ENCODE measurements at regions of chr18 and their contacts with region 1.

Region 1: DNA sequence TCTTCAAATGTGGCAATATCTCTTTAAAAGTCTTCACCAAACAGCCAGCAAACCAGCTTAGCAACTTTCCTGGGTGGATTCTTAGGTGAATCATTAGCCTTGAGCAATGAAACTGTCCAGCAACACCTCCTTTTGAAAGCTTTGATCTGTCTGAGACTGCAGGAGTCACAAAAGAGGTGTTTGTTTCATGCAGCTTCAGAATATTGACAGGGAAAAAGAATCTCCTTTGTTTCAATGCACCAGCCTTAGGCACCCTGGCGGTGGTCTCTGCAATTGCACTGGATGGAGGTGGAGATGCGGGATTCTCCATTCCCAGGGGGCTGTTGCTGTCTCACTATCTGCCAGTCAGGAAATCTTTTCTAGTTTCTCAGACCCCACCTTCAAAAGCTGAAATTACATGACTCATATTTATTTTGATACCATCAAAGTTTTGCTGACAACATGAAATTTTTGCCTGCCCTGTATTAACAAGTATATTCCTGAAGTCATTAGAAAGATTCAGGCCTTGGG is 76.0 kb upstream of the DSG1 start:
- DNase-seq: peak; percentile 63 to 95
- H3K4me3 ChIP-seq: no peak overlapping the region; the same call in 1 of the 2 replicates
- H3K27ac ChIP-seq: peak overlapping the region; percentile 94
- H3K4me1 ChIP-seq: peaks cover 45% of the 10 kb centered on the region
- H3K27me3 ChIP-seq: no peaks in the 10 kb centered on the region
- CTCF ChIP-seq: peak; percentile 80

Region 2: DNA sequence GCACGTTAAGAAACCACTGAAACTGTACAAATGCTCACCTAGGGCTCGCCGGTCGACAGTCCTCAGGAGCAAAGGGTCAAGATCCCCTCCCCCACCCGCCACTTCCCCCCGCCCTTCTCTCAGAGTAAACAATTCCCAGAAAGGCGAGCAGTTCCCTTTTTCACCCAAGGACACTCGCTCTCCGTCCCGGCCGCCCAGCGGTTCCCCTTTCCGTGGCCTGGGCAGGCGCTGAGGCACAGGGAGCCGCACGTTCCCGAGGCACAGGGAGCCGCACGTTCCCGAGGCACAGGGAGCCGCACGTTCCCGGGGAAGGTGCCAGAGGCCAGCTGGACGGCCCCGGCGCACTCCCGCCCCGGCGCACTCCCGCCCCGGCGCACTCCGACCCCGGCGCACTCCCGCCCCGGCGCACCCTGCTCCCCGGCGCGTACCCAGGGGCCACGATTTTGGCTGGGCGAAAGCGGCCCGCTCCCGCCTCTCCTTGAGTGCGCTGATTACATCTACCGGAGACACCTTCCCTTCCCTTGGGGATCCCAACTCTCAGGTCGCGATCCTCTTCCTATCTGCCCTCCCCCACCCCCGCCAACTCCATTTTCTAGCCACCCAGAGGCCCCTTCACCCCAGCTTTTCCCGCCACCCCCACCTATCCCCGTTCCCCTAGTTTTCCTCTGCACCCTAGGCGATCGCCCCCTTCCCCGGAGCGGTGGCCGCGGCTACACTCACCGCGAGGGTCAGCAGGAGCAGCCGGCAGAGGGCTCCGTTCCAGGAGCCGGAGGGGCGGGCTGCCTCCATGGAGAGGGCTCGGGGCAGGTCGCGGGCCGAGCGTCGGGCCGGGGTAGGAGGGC is 140.6 kb before region 1 on chr18:
- CTCF ChIA-PET with region 1: no interaction called
- POLR2A ChIA-PET with region 1: no interaction called
- intact Hi-C with region 1: loop called (anchors 5 kb)
- DNase-seq: peak in 1 of 2 experiments; percentile 50
- H3K4me3 ChIP-seq: peak overlapping the region; percentile 70
- H3K27ac ChIP-seq: peak overlapping the region; percentile 75
- H3K4me1 ChIP-seq: peaks cover 45% of the 10 kb centered on the region
- H3K27me3 ChIP-seq: no peaks in the 10 kb centered on the region
- CTCF ChIP-seq: no peak

Region 3: GRCh38 chr18:31190919-31191318 is 51.0 kb before region 1 on chr18:
- CTCF ChIA-PET with region 1: no interaction called
- POLR2A ChIA-PET with region 1: no interaction called
- intact Hi-C with region 1: loop called (anchors 5 kb)
- DNase-seq: peak; percentile 9 to 72
- H3K4me3 ChIP-seq: no peak overlapping the region
- H3K27ac ChIP-seq: no peak overlapping the region
- H3K4me1 ChIP-seq: peaks cover 22% of the 10 kb centered on the region
- H3K27me3 ChIP-seq: no peaks in the 10 kb centered on the region
- CTCF ChIP-seq: no peak

Region 4: GRCh38 chr18:31230495-31230894 is 11.5 kb before region 1 on chr18:
- CTCF ChIA-PET with region 1: no interaction called
- POLR2A ChIA-PET with region 1: interaction called, 12 read pairs
- intact Hi-C with region 1: no loop called
- DNase-seq: peak in 1 of 2 experiments; percentile 82
- H3K4me3 ChIP-seq: no peak overlapping the region
- H3K27ac ChIP-seq: peak overlapping the region; percentile 76
- H3K4me1 ChIP-seq: peaks cover 18% of the 10 kb centered on the region
- H3K27me3 ChIP-seq: no peaks in the 10 kb centered on the region
- CTCF ChIP-seq: no peak

Region 5: GRCh38 chr18:31429621-31430020 is 187.7 kb after region 1 on chr18:
- CTCF ChIA-PET with region 1: interaction called, 15 read pairs
- POLR2A ChIA-PET with region 1: no interaction called
- intact Hi-C with region 1: no loop called
- DNase-seq: no peak
- H3K4me3 ChIP-seq: no peak overlapping the region
- H3K27ac ChIP-seq: no peak overlapping the region
- H3K4me1 ChIP-seq: no peaks in the 10 kb centered on the region
- H3K27me3 ChIP-seq: no peaks in the 10 kb centered on the region
- CTCF ChIP-seq: no peak

Measured in PC-9 (cell line).